ENCODE measurements at regions of chr1 and their contacts with region 1.

Region 1: GRCh38 chr1:72432645-72433267 is 150.4 kb upstream of the NEGR1 start:
- DNase-seq: no peak
- H3K4me3 ChIP-seq: no peak overlapping the region
- H3K27ac ChIP-seq: no peak overlapping the region
- H3K4me1 ChIP-seq: no peaks in the 10 kb centered on the region
- H3K27me3 ChIP-seq: no peaks in the 10 kb centered on the region
- CTCF ChIP-seq: no peak

Region 2: GRCh38 chr1:72357411-72357810 is 75.3 kb before region 1 on chr1:
- CTCF ChIA-PET with region 1: no interaction called
- POLR2A ChIA-PET with region 1: interaction called, 17 read pairs
- intact Hi-C with region 1: no loop called
- DNase-seq: no peak
- H3K4me3 ChIP-seq: no peak overlapping the region
- H3K27ac ChIP-seq: no peak overlapping the region
- H3K4me1 ChIP-seq: no peaks in the 10 kb centered on the region
- H3K27me3 ChIP-seq: no peaks in the 10 kb centered on the region
- CTCF ChIP-seq: no peak

Region 3: GRCh38 chr1:72954943-72955342 is 522.2 kb after region 1 on chr1:
- CTCF ChIA-PET with region 1: no interaction called
- POLR2A ChIA-PET with region 1: no interaction called
- intact Hi-C with region 1: no loop called
- DNase-seq: no peak
- H3K4me3 ChIP-seq: no peak overlapping the region
- H3K27ac ChIP-seq: no peak overlapping the region
- H3K4me1 ChIP-seq: no peaks in the 10 kb centered on the region
- H3K27me3 ChIP-seq: no peaks in the 10 kb centered on the region
- CTCF ChIP-seq: no peak